ENCODE measurements at regions of chr6 and their contacts with region 1.

Region 1: DNA sequence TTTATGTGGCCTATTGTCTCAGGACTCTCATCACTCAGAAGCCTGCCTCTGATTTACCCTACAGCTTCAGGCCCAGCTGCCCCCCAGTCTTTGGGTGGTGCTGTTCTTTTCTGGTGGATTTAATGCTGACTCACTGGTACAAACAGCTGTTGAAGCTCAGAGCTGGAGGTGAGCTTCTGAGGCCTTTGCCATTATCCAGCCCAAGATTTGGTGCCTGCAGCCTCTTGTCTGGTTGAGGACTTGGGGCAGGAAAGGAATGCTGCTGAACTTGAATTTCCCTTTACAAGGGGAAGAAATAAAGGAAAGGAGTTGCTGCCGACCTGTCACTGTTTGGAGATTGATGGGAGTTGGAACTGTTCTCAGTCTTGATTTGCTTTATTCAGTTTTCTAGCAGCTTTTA is 19.8 kb downstream of the ABCF1 start:
- DNase-seq: no peak
- CTCF ChIP-seq: no peak

Region 2: GRCh38 chr6:30311101-30311500 is 279.9 kb before region 1 on chr6:
- CTCF ChIA-PET with region 1: no interaction called
- POLR2A ChIA-PET with region 1: no interaction called
- DNase-seq: no peak
- CTCF ChIP-seq: no peak

Region 3: GRCh38 chr6:30463651-30464618 is 127.1 kb before region 1 on chr6:
- CTCF ChIA-PET with region 1: no interaction called
- POLR2A ChIA-PET with region 1: no interaction called
- DNase-seq: no peak
- CTCF ChIP-seq: no peak

Region 4: GRCh38 chr6:30611150-30611855 is 20.3 kb after region 1 on chr6:
- CTCF ChIA-PET with region 1: interaction called, 56 read pairs
- POLR2A ChIA-PET with region 1: interaction called, 12 read pairs
- DNase-seq: no peak
- CTCF ChIP-seq: no peak